ENCODE measurements at regions of chr6 and their contacts with region 1.

Region 1: GRCh38 chr6:157274471-157275226 is 48.7 kb downstream of the TMEM242 start:
- DNase-seq: peak; percentile 9
- ATAC-seq: peak; percentile 97
- H3K4me3 ChIP-seq: peak overlapping the region; percentile 79
- H3K27ac ChIP-seq: no peak overlapping the region
- H3K4me1 ChIP-seq: no peaks in the 10 kb centered on the region
- H3K27me3 ChIP-seq: no peaks in the 10 kb centered on the region; a peak in 1 of 4 replicates
- CTCF ChIP-seq: peak; percentile 59 to 82 (median 65); a peak in 4 of 6 replicates
- EP300 ChIP-seq: no peak
- POLR2A ChIP-seq: peak; percentile 35; the same call in 1 of the 2 replicates
- RAD21 ChIP-seq: peak; percentile 85

Region 2: DNA sequence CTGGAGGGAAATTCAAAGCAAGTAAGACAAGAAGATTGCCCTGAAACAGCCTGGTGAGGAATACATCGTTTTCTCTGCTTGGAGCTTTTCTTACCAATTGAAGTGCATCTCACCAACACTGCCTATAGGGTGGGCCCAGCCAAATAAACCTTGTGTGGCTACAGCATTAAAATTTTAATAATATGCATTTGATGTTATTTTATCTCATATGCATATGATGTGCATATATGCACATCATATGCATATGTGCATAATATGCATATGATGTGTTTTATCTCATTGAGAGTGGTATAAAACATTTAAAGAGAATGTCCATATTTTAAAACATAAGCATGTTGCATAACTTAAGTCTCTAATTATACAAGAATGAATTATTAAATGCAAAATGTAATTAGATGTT is 826.1 kb before region 1 on chr6:
- CTCF ChIA-PET with region 1: no interaction called
- POLR2A ChIA-PET with region 1: no interaction called
- RAD21 ChIA-PET with region 1: no interaction called
- SMC1A ChIA-PET with region 1: no interaction called
- in situ Hi-C with region 1: no loop called
- intact Hi-C with region 1: no loop called
- DNase-seq: no peak
- ATAC-seq: no peak
- H3K4me3 ChIP-seq: no peak overlapping the region
- H3K27ac ChIP-seq: no peak overlapping the region
- H3K4me1 ChIP-seq: no peaks in the 10 kb centered on the region
- H3K27me3 ChIP-seq: no peaks in the 10 kb centered on the region
- CTCF ChIP-seq: no peak
- EP300 ChIP-seq: no peak
- POLR2A ChIP-seq: no peak
- RAD21 ChIP-seq: no peak

Region 3: GRCh38 chr6:157203312-157203744 is 71.3 kb before region 1 on chr6:
- CTCF ChIA-PET with region 1: no interaction called
- POLR2A ChIA-PET with region 1: no interaction called
- RAD21 ChIA-PET with region 1: no interaction called
- SMC1A ChIA-PET with region 1: interaction called, 3 read pairs
- in situ Hi-C with region 1: no loop called
- intact Hi-C with region 1: loop called (anchors 1 kb)
- DNase-seq: peak; percentile 84
- ATAC-seq: peak; percentile 98
- H3K4me3 ChIP-seq: peak overlapping the region; percentile 14; the same call in 1 of the 2 replicates
- H3K27ac ChIP-seq: no peak overlapping the region
- H3K4me1 ChIP-seq: peaks cover 11% of the 10 kb centered on the region
- H3K27me3 ChIP-seq: no peaks in the 10 kb centered on the region
- CTCF ChIP-seq: no peak
- EP300 ChIP-seq: peak; percentile 48 to 87; a peak in 3 of 4 replicates
- POLR2A ChIP-seq: no peak
- RAD21 ChIP-seq: no peak

Region 4: DNA sequence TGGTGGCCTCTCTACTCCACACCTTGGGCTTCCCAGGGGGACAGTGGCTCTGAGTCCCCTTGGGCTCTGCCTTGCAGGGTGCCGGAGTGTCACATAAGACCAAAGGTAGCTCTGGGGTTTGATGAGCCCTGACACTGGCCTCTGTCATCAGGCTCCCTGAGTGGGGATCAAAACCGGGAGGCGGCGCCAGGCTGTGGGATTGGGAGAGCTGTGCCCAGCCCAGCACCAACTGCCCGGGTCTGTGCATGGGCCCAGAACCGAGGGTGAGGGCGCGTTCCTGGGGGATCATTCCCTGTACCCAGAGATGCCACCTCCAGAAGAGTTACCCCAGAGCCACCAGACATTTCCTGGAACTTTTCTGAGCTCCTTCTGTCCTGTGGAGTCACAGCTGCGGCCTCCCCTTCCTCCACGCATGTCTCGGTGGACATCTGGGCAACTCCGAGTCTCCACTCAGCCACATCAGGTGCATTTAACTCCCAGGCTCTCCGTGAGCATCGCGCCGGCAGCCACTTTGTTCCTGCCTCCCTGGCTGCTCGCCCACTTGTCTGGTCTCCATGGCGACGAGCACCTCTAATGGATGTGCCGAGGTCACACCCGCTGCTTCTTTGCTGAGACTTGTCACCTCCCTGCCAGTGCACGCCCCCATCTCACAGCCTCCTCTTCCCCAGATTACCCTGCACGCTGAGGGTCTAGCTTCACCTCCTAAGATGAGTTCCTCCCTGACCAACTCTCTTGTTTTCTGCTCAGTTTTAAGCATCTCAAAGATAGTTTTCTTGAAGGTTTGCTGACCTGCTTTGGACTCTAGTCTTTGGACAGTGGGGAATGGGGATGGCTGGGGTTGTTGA is 45.9 kb before region 1 on chr6:
- CTCF ChIA-PET with region 1: no interaction called
- POLR2A ChIA-PET with region 1: no interaction called
- RAD21 ChIA-PET with region 1: interaction called, 5 read pairs
- SMC1A ChIA-PET with region 1: no interaction called
- in situ Hi-C with region 1: no loop called
- intact Hi-C with region 1: loop called (anchors 1 kb)
- DNase-seq: no peak
- ATAC-seq: no peak
- H3K4me3 ChIP-seq: no peak overlapping the region
- H3K27ac ChIP-seq: no peak overlapping the region
- H3K4me1 ChIP-seq: no peaks in the 10 kb centered on the region
- H3K27me3 ChIP-seq: peaks cover 0 to 3% of the 10 kb centered on the region in 2 experiments; a peak in 3 of 4 replicates
- CTCF ChIP-seq: no peak
- EP300 ChIP-seq: no peak
- POLR2A ChIP-seq: no peak
- RAD21 ChIP-seq: no peak

Region 5: DNA sequence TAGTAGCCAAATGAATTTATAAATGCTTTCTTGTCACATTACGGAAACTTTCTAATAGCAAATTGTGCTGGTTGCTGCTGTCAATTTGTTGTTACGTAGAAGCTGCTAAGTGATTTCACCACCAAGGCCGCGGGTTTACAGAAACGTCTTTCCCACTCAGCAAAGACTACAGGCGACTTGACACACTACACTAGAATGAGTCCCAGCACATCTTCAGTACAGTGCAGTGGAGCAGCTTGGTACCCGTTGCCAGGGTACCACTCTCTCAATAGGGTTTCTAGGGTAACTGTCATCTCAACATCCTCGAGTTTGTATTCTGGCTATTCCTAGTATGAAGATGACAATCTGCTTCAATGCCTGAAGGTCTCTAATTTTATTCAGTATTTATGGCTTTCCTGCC is 83.6 kb after region 1 on chr6:
- CTCF ChIA-PET with region 1: no interaction called
- POLR2A ChIA-PET with region 1: no interaction called
- RAD21 ChIA-PET with region 1: no interaction called
- SMC1A ChIA-PET with region 1: no interaction called
- in situ Hi-C with region 1: no loop called
- intact Hi-C with region 1: no loop called
- DNase-seq: no peak
- ATAC-seq: no peak
- H3K4me3 ChIP-seq: no peak overlapping the region
- H3K27ac ChIP-seq: no peak overlapping the region
- H3K4me1 ChIP-seq: no peaks in the 10 kb centered on the region
- H3K27me3 ChIP-seq: peaks cover 0 to 12% of the 10 kb centered on the region in 2 experiments; a peak in 3 of 4 replicates
- CTCF ChIP-seq: no peak
- EP300 ChIP-seq: no peak
- POLR2A ChIP-seq: no peak
- RAD21 ChIP-seq: no peak